Right ventricle myocardium superior (tissue), 1 donor: ENCODE measurements at regions of chr1 and their contacts with region 1.

Region 1: GRCh38 chr1:157992031-157992832 is 1.2 kb upstream of the KIRREL1 start:
- DNase-seq: peak; percentile 83
- ATAC-seq: peak; percentile 82

Region 2: DNA sequence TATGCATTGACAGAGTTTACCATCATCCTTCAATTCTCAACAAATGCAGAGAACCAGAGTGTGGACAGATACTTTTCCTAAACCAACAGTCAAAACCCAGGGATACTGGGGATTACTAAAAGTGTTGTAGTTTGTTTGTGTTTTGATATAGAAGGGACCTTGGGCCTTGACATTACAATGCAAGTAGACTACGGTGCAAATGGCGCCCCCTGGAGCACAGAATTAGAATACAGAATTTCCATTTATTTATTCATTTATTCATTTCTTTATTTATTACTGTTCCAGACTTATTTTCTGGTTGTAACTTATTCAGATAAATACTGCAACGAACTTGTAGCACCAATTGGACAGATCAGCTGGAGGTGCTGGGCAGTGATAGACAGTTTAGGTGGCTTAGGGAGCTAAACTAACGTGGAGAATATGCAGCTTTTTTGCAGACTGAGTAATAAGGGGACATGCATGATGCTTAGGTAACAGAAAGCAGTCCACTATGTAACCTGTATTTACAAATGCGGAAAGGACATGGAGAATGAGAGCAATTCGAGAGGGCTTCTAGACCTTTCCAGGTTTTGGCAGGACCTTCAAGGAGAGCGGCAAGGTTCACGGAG is 43.8 kb after region 1 on chr1:
- intact Hi-C with region 1: loop called (anchors 5 kb)
- DNase-seq: no peak
- ATAC-seq: peak; percentile 53

Region 3: GRCh38 chr1:158087320-158087927 is 95.2 kb after region 1 on chr1:
- intact Hi-C with region 1: loop called (anchors 2 kb)
- DNase-seq: peak; percentile 46
- ATAC-seq: peak; percentile 45